ENCODE measurements at regions of chr7 and their contacts with region 1.

Region 1: DNA sequence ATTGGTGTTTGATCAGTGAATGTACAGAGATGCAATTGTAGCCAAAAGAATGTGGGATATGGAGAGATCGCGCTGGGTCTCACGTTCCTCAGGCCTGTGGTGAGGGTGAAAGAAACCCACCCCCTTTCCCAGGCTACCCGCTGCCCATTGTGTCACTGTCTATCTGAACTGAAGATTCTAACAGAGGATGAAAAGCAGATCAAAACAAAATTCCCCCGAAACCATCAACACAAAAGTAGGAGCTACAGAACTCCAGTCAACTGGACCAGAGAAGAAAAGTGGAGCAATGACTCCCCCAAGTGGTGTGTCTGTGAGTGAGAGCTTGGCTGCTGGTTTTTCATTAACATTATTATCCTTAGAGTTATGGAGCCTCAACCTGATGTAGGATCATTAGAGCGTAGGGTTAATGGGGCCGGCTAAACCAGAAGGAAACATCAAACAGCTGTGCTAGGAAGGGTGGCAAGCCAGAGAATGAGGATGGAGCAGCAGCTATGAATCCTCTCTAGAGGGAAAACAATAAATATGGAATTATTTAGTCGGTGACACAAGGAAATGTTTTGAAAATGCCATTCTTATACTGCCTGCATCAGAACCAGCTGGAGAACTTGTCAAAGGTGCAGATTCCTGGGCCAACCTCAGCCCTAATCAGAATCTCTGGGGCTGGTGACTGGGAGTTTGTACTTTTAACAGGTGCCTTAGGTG is 38.3 kb downstream of the AKR1B1 start:
- DNase-seq: peak; percentile 61
- ATAC-seq: peak; percentile 82
- H3K4me3 ChIP-seq: peak overlapping the region in 1 of 3 experiments; percentile 13; a peak in 2 of 6 replicates
- H3K27ac ChIP-seq: no peak overlapping the region
- H3K4me1 ChIP-seq: peaks cover 50% of the 10 kb centered on the region
- H3K27me3 ChIP-seq: no peaks in the 10 kb centered on the region
- CTCF ChIP-seq: peak; percentile 84
- EP300 ChIP-seq: no peak
- POLR2A ChIP-seq: no peak
- RAD21 ChIP-seq: peak; percentile 72

Region 2: GRCh38 chr7:133853706-133854276 is 566.8 kb before region 1 on chr7:
- CTCF ChIA-PET with region 1: no interaction called
- POLR2A ChIA-PET with region 1: no interaction called
- in situ Hi-C with region 1: no loop called
- intact Hi-C with region 1: loop called (anchors 10 kb)
- DNase-seq: peak; percentile 47
- ATAC-seq: peak; percentile 98
- H3K4me3 ChIP-seq: no peak overlapping the region
- H3K27ac ChIP-seq: no peak overlapping the region
- H3K4me1 ChIP-seq: 0 out of 2 replicates have a peak, but pooled peaks cover 7% of the 10 kb centered on the region
- H3K27me3 ChIP-seq: no peaks in the 10 kb centered on the region
- CTCF ChIP-seq: peak; percentile 54
- EP300 ChIP-seq: no peak
- POLR2A ChIP-seq: no peak
- RAD21 ChIP-seq: no peak

Region 3: GRCh38 chr7:134016223-134016941 is 404.2 kb before region 1 on chr7:
- CTCF ChIA-PET with region 1: no interaction called
- POLR2A ChIA-PET with region 1: no interaction called
- in situ Hi-C with region 1: no loop called
- intact Hi-C with region 1: loop called (anchors 10 kb)
- DNase-seq: peak; percentile 21
- ATAC-seq: peak; percentile 80
- H3K4me3 ChIP-seq: no peak overlapping the region
- H3K27ac ChIP-seq: no peak overlapping the region
- H3K4me1 ChIP-seq: peaks cover 13% of the 10 kb centered on the region
- H3K27me3 ChIP-seq: no peaks in the 10 kb centered on the region
- CTCF ChIP-seq: peak; percentile 78
- EP300 ChIP-seq: no peak
- POLR2A ChIP-seq: no peak
- RAD21 ChIP-seq: no peak

Region 4: DNA sequence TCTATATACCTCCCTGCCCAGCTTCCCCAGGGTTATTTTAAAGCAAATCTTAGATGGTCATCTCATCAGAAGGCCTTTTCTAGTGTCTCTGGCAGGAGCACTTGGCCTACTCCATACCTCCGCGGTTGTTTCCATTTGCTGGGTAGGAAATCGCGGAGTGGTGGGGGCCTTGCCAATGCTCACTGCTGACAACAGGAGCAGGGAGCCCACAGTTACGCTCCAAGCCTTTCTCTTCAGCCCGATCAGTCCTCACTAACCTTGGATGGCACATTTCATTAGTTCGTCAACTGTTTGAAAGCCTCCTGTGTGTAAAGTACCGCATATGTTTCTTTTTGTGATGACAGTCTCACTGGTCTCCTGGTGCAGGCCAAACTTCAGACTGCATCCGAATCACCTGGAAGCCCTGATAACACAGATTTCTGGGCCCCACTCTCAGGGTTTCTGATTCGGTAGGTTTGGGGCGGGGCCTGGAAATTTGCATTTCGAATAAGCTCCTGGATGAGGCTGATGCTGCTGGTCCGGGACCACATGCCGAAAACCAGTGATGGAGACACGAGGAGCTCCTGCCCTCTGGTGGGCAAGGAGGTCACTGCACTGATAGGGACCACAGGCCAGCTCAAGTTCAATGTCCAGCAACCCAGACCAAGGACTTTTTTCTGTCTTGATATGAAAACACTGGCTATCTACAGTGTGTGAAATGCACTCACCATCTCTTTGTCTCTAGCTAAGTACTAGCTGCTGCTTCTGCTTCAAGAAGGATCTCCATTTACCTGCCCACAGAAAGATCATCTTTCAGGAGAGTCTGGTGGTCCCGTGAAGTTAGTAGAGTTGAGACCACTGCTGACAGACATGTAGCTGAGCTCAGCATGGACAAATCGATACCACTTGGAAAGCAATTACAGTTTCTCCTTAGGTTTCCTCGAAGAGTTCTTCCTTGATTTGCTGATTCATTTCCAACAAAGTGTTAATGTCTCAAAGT is 279.4 kb before region 1 on chr7:
- CTCF ChIA-PET with region 1: interaction called, 6 read pairs
- POLR2A ChIA-PET with region 1: no interaction called
- in situ Hi-C with region 1: loop called (anchors 10 kb)
- intact Hi-C with region 1: loop called (anchors 1 kb)
- DNase-seq: peak; percentile 34
- ATAC-seq: peak; percentile 96
- H3K4me3 ChIP-seq: no peak overlapping the region
- H3K27ac ChIP-seq: no peak overlapping the region
- H3K4me1 ChIP-seq: peaks cover 6% of the 10 kb centered on the region; the same call in 1 of the 2 replicates
- H3K27me3 ChIP-seq: no peaks in the 10 kb centered on the region
- CTCF ChIP-seq: peak; percentile 90
- EP300 ChIP-seq: no peak
- POLR2A ChIP-seq: no peak
- RAD21 ChIP-seq: peak; percentile 49; the same call in 1 of the 2 replicates

Region 5: GRCh38 chr7:134234216-134234615 is 186.4 kb before region 1 on chr7:
- CTCF ChIA-PET with region 1: no interaction called
- POLR2A ChIA-PET with region 1: no interaction called
- in situ Hi-C with region 1: no loop called
- intact Hi-C with region 1: no loop called
- DNase-seq: no peak
- ATAC-seq: no peak
- H3K4me3 ChIP-seq: no peak overlapping the region
- H3K27ac ChIP-seq: no peak overlapping the region
- H3K4me1 ChIP-seq: no peaks in the 10 kb centered on the region
- H3K27me3 ChIP-seq: 0 out of 5 replicates have a peak, but pooled peaks cover 0 to 5% of the 10 kb centered on the region in 2 experiments
- CTCF ChIP-seq: no peak
- EP300 ChIP-seq: no peak
- POLR2A ChIP-seq: no peak
- RAD21 ChIP-seq: no peak

Region 6: GRCh38 chr7:134368851-134369552 is 51.6 kb before region 1 on chr7:
- CTCF ChIA-PET with region 1: no interaction called
- POLR2A ChIA-PET with region 1: interaction called, 4 read pairs
- in situ Hi-C with region 1: no loop called
- intact Hi-C with region 1: loop called (anchors 5 kb)
- DNase-seq: peak; percentile 87
- ATAC-seq: peak; percentile 80
- H3K4me3 ChIP-seq: no peak overlapping the region
- H3K27ac ChIP-seq: peak overlapping the region; percentile 41
- H3K4me1 ChIP-seq: peaks cover 65% of the 10 kb centered on the region
- H3K27me3 ChIP-seq: no peaks in the 10 kb centered on the region; a peak in 1 of 5 replicates
- CTCF ChIP-seq: no peak
- EP300 ChIP-seq: peak in 1 of 2 experiments; percentile 77; a peak in 2 of 4 replicates
- POLR2A ChIP-seq: no peak
- RAD21 ChIP-seq: no peak

Region 7: DNA sequence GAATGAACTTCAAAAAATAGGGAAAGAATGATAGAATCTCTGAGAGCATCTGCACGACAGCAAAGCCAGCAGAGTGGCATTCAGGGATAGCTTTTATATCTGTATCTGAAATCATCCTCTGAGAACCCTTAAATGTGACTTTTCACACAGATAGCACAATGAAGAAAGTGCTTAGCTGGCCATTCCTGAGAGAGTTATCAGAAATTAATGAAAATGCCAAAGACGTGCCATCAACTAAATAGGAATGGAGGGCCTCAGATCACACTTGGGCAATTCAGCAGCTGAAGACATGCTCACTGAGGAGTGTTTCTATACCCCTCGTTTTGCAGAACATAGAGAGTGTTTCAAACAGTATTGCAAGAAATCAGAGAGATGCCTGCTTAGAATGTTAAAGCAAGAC is 13.3 kb before region 1 on chr7:
- CTCF ChIA-PET with region 1: no interaction called
- POLR2A ChIA-PET with region 1: no interaction called
- in situ Hi-C with region 1: no loop called
- intact Hi-C with region 1: no loop called
- DNase-seq: no peak
- ATAC-seq: no peak
- H3K4me3 ChIP-seq: no peak overlapping the region
- H3K27ac ChIP-seq: no peak overlapping the region
- H3K4me1 ChIP-seq: no peaks in the 10 kb centered on the region
- H3K27me3 ChIP-seq: peaks cover 0 to 19% of the 10 kb centered on the region in 2 experiments; a peak in 2 of 5 replicates
- CTCF ChIP-seq: no peak
- EP300 ChIP-seq: no peak
- POLR2A ChIP-seq: no peak
- RAD21 ChIP-seq: no peak

Region 8: GRCh38 chr7:134444198-134444871 is 23.8 kb after region 1 on chr7:
- CTCF ChIA-PET with region 1: no interaction called
- POLR2A ChIA-PET with region 1: no interaction called
- in situ Hi-C with region 1: no loop called
- intact Hi-C with region 1: no loop called
- DNase-seq: no peak
- ATAC-seq: peak; percentile 43; the same call in 2 of the 3 replicates
- H3K4me3 ChIP-seq: no peak overlapping the region
- H3K27ac ChIP-seq: no peak overlapping the region
- H3K4me1 ChIP-seq: no peaks in the 10 kb centered on the region
- H3K27me3 ChIP-seq: no peaks in the 10 kb centered on the region
- CTCF ChIP-seq: no peak
- EP300 ChIP-seq: no peak
- POLR2A ChIP-seq: no peak
- RAD21 ChIP-seq: no peak

Measured in HepG2 (cell line).